ENCODE measurements at regions of chr17 and their contacts with region 1.

Region 1: DNA sequence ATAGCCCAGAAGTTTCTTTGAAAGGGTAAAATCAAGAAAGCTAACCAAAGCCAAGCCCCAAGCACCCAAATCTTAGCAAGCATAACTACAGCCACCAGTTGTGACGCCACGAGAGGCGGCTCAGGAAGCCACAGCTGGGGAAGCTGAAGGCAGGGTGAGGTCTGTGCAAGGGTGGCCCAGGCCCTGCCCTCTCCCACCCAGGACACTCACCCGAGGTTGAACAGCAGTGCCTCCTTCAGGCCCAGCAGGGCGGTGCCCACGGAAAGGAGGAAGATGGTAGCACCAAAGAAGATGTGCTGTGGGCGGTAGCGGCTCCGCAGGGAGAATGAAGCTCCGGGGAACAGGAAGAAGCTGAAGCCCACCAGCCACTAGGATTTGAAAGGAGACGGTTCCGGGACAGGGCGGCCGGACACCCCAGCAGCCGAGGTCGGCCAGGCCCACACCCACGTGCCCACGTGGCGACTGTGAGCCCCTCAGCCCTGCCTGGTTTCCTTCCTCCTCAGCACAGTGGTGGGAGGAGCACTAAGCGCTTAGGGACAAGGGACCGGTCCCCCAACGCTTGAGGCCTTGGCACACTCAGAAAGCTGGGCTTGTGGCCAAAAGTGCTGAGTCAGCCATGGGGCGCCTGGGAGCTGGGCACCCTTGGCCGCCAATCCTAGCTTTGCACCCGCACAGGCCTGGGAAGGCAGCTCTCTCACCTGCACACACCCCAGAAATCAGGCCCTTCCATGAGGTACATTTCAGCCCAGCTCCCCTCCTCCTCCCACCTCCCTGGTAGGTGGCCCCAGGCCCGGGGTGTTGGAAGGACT is 11.0 kb downstream of the CYB561 start:
- DNase-seq: peak; percentile 43
- ATAC-seq: no peak
- H3K4me3 Mint-ChIP-seq: no peak overlapping the region
- H3K27ac Mint-ChIP-seq: peak overlapping the region; percentile 36; the same call in 1 of the 2 replicates
- H3K4me1 Mint-ChIP-seq: peaks cover 25% of the 10 kb centered on the region
- H3K27me3 Mint-ChIP-seq: no peaks in the 10 kb centered on the region
- CTCF ChIP-seq: peak; percentile 19; the same call in 1 of the 2 replicates

Region 2: GRCh38 chr17:63419949-63420867 is 14.9 kb before region 1 on chr17:
- CTCF ChIA-PET with region 1: interaction called, 121 read pairs
- POLR2A ChIA-PET with region 1: no interaction called
- DNase-seq: no peak
- ATAC-seq: no peak
- H3K4me3 Mint-ChIP-seq: no peak overlapping the region
- H3K27ac Mint-ChIP-seq: no peak overlapping the region
- H3K4me1 Mint-ChIP-seq: no peaks in the 10 kb centered on the region; the same call in 1 of the 2 replicates
- H3K27me3 Mint-ChIP-seq: no peaks in the 10 kb centered on the region
- CTCF ChIP-seq: no peak

Region 3: GRCh38 chr17:63490321-63490720 is 55.2 kb after region 1 on chr17:
- CTCF ChIA-PET with region 1: interaction called, 12 read pairs
- POLR2A ChIA-PET with region 1: no interaction called
- DNase-seq: no peak
- ATAC-seq: peak; percentile 72
- H3K4me3 Mint-ChIP-seq: no peak overlapping the region
- H3K27ac Mint-ChIP-seq: no peak overlapping the region; the same call in 1 of the 2 replicates
- H3K4me1 Mint-ChIP-seq: no peaks in the 10 kb centered on the region
- H3K27me3 Mint-ChIP-seq: no peaks in the 10 kb centered on the region
- CTCF ChIP-seq: no peak

Region 4: DNA sequence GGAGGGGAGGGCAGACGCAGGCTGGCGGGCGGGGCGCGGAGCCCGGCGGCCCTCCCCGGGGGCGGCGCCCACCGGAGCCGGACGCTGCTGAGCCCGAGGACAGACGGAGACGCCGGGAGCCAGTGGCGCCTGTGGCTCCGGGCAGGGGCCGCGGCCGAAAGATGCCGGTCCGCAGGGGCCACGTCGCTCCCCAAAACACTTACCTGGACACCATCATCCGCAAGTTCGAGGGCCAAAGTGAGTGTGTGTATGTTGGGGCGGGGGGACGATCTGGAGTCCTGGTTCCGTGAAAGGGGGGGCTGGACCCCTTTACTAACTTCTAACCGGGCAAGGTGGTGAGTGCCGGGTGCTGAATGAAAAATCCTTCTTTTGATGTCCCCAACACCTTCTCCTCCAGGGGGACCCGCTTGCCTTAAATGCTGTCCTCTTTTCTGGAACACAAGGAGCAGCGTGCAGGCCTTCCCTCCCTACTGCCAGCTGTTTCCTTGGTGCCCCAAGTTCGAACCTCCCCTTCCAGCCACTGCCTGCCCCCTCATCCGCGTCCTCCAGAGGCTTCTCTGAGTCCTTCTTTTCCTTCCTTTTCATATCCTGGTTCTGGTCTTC is 88.3 kb after region 1 on chr17 and contains the start of gene KCNH6:
- CTCF ChIA-PET with region 1: interaction called, 10 read pairs
- POLR2A ChIA-PET with region 1: no interaction called
- DNase-seq: no peak
- ATAC-seq: peak; percentile 11
- H3K4me3 Mint-ChIP-seq: peak within 1 kb of the TSS; percentile 67
- H3K27ac Mint-ChIP-seq: no peak within 1 kb of the TSS; the same call in 1 of the 2 replicates
- H3K4me1 Mint-ChIP-seq: peaks cover 34% of the 10 kb centered on the region
- H3K27me3 Mint-ChIP-seq: peaks cover 4% of the 10 kb centered on the region
- CTCF ChIP-seq: no peak
- total RNA-seq, gene KCNH6: 2.1 to 2.4 TPM (median 2.3 TPM) in 3 replicates

Region 5: DNA sequence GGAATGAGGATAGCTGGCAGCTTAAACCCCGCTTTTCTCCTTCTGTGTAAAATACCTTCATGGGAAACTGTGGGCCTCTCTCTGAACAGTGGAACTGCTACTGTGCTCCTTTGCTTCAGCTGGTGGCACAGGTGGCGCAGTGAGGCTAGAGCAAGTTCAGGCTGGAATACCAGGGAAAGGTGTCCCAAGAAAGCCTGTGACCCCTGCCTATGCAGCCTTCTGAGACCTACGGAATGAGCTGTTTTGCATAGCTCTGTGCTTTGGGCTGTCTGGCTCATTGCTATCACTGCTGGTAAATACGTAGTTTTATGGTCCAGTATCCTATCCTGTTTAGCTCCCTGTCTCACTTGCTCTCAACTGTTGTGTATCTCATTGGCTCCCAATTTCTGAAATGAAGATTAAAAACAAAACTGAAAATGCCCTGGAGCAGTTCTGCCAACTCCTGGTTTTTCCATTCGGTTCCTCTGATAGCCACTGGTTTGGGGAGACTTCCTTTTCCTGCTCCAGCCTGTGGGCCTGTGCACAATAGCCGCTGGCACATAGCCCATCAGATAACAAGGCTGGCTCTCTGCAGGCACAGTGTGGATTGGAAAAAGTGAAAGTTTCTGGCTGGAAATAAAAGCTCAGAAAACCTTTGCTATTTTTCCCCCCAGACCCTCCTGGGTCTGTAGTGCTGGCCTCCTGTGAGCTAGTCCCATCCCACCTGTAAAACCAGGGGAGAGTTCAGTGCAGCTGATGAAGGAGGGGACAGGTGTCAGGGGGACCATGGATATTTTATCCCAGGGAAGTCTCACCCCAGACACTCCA is 240.7 kb after region 1 on chr17:
- CTCF ChIA-PET with region 1: interaction called, 14 read pairs
- POLR2A ChIA-PET with region 1: interaction called, 4 read pairs
- DNase-seq: no peak
- ATAC-seq: peak; percentile 38
- H3K4me3 Mint-ChIP-seq: no peak overlapping the region
- H3K27ac Mint-ChIP-seq: peak overlapping the region; percentile 73
- H3K4me1 Mint-ChIP-seq: peaks cover 43% of the 10 kb centered on the region
- H3K27me3 Mint-ChIP-seq: no peaks in the 10 kb centered on the region
- CTCF ChIP-seq: no peak